Tibial artery (tissue), 4 donors: ENCODE measurements at regions of chr4 and their contacts with region 1.

Region 1: DNA sequence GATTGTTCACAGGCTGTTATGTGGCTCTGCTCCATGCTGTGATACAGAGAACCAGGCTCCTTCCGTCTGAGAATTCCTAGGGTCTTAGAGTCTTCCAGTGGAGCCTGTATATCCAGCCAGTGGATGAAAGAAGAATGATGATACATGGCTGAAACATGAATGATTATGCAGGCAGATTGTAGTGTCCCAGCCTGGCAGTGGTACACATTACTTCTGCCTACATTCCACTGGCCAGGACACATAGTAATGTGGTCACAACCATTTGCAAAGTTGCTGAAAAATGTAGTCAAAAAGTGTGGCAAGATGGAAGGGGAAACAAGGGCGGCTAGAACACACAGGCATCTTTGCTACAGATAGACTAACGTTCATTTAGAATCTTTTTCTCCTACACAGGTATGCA is 4.5 kb upstream of the GBA3 start:
- DNase-seq: no peak
- H3K4me3 ChIP-seq: no peak overlapping the region
- H3K27ac ChIP-seq: no peak overlapping the region
- H3K4me1 ChIP-seq: peaks cover 0 to 6% (median 0%) of the 10 kb centered on the region in 4 donors
- H3K27me3 ChIP-seq: no peaks in the 10 kb centered on the region
- CTCF ChIP-seq: no peak

Region 2: DNA sequence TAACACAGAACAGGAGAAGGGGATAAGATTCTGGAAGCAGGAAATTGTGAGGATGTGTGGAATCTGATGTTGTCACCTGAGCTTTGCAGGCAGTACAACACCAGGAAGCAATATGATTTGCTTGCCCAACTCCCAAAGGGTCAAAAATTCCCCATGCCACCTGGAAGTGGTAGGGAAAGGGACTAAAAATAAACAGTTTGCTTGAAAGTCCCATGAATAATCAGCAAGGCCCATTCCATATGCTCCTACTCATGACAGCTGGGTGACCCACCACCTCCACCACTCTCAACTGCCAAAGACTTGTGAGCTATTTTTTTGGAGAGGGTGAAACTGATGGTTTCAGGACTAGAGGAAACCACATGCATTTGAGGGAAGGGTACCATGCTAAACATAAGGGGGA is 908.1 kb before region 1 on chr4:
- intact Hi-C with region 1: loop called (anchors 10 kb)
- DNase-seq: no peak
- H3K4me3 ChIP-seq: no peak overlapping the region
- H3K27ac ChIP-seq: no peak overlapping the region
- H3K4me1 ChIP-seq: no peaks in the 10 kb centered on the region
- H3K27me3 ChIP-seq: no peaks in the 10 kb centered on the region
- CTCF ChIP-seq: no peak

Region 3: DNA sequence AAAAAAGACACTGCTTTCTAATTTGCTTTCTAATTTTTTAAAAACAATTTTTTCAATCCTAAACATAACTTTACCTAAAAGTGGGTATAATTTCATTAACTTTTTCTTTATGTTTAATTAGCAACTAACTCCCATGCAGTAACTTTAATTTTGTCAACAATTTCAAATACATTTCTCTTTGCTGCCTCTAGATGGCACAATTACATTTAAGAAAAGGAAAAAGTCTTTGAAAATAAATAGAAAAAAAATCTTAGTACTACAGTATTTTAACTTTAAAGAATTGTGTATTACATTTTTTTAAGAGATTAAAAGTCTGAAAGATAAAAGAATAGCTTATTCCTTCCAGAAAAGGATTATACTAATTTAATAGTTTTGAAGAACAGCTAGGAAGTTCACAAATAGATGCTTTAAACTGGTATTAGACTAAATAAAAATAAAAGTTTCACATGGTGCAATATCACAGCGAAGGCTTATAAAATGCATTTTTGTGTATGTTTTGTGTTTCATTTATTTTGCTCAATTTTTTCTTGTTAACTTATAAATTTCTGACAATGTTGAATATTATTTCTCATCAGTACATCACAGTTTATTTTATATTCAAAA is 277.5 kb before region 1 on chr4:
- intact Hi-C with region 1: loop called (anchors 2 kb)
- DNase-seq: no peak
- H3K4me3 ChIP-seq: no peak overlapping the region
- H3K27ac ChIP-seq: no peak overlapping the region
- H3K4me1 ChIP-seq: no peaks in the 10 kb centered on the region
- H3K27me3 ChIP-seq: no peaks in the 10 kb centered on the region
- CTCF ChIP-seq: peak; percentile 46 to 56

Region 4: DNA sequence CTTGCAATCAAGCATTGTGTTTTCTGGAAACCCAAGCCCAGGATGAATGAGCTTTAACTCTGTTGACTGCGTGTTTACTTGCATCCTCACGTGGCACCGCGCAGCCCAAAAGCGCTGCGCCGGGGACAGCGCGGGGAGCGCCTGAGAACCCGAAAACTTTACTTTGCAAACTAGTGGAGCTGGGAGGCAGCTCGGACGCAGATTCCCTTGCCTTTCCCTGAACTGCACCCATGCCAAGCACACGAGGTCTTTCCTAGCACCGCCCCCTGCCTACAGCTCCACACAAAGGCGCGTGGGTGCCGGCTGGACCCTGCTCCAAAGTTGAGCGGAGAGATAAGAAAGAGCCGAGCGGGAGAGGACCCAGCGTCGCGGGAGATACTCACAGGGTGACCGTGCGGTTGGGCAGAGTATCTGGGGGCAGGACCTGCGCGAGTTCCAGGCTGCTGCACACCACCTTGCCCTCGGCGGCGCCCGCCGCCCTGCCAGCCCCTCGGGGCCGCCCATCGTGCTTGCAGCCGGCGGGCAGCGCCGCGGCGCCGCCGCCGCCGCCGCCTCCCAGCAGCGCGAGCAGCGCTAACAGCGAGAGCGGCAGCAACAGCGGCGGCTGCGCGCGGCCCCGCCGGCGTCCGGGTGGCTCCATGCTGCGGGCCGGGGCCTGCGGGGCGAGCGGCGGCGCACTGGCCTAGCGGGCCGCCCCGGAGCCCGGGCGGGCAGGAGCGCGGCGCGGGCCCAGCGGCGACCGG is 172.9 kb before region 1 on chr4:
- intact Hi-C with region 1: loop called (anchors 10 kb)
- DNase-seq: peak; percentile 67 to 79
- H3K4me3 ChIP-seq: peak overlapping the region; percentile 59 to 73
- H3K27ac ChIP-seq: peak overlapping the region; percentile 77 to 81
- H3K4me1 ChIP-seq: peaks cover 0 to 16% (median 4%) of the 10 kb centered on the region in 4 donors
- H3K27me3 ChIP-seq: no peaks in the 10 kb centered on the region
- CTCF ChIP-seq: no peak

Region 5: GRCh38 chr4:22546299-22546698 is 141.9 kb before region 1 on chr4:
- intact Hi-C with region 1: no loop called
- DNase-seq: no peak
- H3K4me3 ChIP-seq: no peak overlapping the region
- H3K27ac ChIP-seq: no peak overlapping the region
- H3K4me1 ChIP-seq: no peaks in the 10 kb centered on the region
- H3K27me3 ChIP-seq: no peaks in the 10 kb centered on the region
- CTCF ChIP-seq: no peak

Region 6: GRCh38 chr4:22614114-22614513 is 74.1 kb before region 1 on chr4:
- intact Hi-C with region 1: loop called (anchors 10 kb)
- DNase-seq: no peak
- H3K4me3 ChIP-seq: no peak overlapping the region
- H3K27ac ChIP-seq: no peak overlapping the region
- H3K4me1 ChIP-seq: peaks cover 0 to 9% (median 2%) of the 10 kb centered on the region in 4 donors
- H3K27me3 ChIP-seq: no peaks in the 10 kb centered on the region
- CTCF ChIP-seq: no peak